Pancreas (tissue), 10 donors: ENCODE measurements at regions of chr12 and their contacts with region 1.

Region 1: GRCh38 chr12:113161414-113162016 is 12.0 kb downstream of the CFAP73 start:
- DNase-seq: no peak
- ATAC-seq: no peak
- H3K4me3 ChIP-seq: no peak overlapping the region
- H3K27ac ChIP-seq: no peak overlapping the region
- H3K4me1 ChIP-seq: no peaks in the 10 kb centered on the region
- H3K27me3 ChIP-seq: no peaks in the 10 kb centered on the region
- CTCF ChIP-seq: no peak

Region 2: DNA sequence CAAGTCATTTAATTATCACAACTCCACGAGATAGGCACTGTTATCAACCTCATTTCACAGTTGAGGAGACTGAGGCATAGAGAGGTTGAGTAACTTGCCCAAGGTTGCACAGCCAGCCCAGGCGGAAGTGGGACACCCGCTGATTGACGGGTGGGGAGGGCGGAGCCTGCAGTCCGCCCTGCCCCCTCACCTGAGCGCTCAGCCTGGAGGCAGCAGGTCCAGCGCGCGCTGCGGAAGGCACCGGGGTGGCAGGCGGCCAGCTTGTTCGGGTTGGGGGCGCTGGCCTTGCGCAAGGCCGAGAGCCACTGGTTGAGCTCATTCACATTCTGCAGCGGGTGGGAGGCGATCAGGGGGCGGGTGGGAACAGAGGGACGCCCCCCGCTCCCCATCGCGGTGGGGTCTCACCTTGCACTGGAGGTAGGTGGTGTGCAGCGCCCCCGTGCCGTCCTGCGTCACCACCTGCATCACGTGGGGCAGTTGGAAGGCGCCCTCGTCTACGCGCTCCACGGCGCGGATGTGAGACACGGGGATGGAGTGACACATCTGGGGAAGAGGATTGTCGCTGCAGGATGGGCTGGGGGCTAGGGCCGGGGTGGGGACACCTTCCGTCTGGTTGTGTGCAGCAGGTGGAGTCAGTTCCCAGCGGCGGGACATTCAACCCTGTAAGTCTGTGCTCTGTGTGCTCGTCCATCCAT is 57.6 kb before region 1 on chr12:
- intact Hi-C with region 1: loop called in 1 of 3 experiments (anchors 10 kb)
- DNase-seq: peak in 5 of 6 donors; percentile 36 to 73 (median 66)
- ATAC-seq: peak; percentile 71 to 92 (median 75)
- H3K4me3 ChIP-seq: peak overlapping the region in 1 of 4 donors; percentile 38
- H3K27ac ChIP-seq: no peak overlapping the region
- H3K4me1 ChIP-seq: no peaks in the 10 kb centered on the region
- H3K27me3 ChIP-seq: no peaks in the 10 kb centered on the region
- CTCF ChIP-seq: no peak

Region 3: GRCh38 chr12:113271853-113272561 is 110.5 kb after region 1 on chr12:
- intact Hi-C with region 1: no loop called
- DNase-seq: peak; percentile 77 to 84 (median 83)
- ATAC-seq: peak; percentile 93 to 96 (median 95)
- H3K4me3 ChIP-seq: no peak overlapping the region
- H3K27ac ChIP-seq: peak overlapping the region; percentile 17 to 81 (median 66)
- H3K4me1 ChIP-seq: peaks cover 11 to 29% (median 21%) of the 10 kb centered on the region in 3 donors
- H3K27me3 ChIP-seq: no peaks in the 10 kb centered on the region
- CTCF ChIP-seq: no peak